Panc1 (cell line): ENCODE measurements at regions of chr15 and their contacts with region 1.

Region 1: DNA sequence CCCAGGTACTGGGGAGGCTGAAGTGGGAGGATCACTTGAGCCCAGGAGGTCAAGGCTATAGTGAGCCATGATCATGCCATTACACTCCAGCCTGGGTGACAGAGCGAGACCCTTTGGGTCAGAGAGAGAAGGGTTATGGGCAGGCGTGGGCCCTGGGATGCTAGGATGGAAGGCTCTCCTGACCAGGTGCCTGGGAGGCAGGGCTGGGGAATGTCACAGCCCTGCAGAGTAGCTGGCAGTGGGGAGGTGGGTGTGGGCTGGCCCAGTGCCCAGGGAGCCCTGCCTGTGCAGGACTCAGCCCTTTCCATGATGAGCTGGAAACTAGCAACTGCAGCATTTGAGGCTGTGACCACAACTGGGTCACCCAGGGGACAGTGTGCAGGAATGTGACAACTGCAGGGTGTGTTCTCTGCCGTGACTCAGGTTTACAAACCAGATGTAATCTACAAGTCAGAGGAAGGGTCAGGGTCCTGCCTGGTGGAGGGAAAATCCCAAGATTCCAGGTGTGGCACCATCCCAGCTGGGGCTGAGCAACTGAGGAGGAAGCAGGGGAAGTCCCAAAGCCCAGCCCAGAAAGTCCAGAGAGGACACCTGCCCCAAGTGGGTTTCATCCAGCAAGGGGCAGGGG is 45.4 kb downstream of the SLC28A1 start:
- DNase-seq: no peak
- ATAC-seq: peak; percentile 86
- H3K4me3 ChIP-seq: no peak overlapping the region
- H3K27ac ChIP-seq: no peak overlapping the region; the same call in 1 of the 2 replicates
- H3K4me1 ChIP-seq: peaks cover 20% of the 10 kb centered on the region
- H3K27me3 ChIP-seq: no peaks in the 10 kb centered on the region
- CTCF ChIP-seq: no peak

Region 2: DNA sequence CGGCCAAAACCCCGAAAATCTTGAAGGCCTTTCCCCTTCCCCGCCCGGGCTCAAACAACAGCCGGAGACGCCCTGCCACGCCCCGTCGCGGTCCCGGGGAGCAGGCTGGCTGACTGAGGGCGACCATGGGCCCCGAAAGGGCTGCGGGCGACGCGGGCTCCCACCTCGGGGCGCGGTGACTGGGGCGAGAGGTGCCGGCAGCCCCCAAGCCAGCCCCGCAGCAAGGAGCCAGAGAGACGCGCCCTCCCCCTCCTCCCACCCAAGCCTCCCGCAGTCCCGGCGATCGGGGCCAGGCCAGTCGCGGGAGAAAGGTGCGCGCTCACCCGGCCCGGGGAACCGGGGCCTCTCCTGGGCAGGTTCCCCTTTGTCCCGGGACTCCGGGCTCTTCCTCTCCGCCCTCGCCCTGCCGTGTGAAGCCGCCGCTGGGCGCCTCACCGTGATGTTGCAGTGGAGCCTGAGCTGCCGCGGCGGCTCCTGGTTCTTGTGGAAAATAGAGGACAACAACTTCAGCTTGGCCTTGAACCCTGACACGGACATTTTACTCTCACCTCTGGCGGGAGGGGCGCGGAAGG is 359.6 kb before region 1 on chr15:
- CTCF ChIA-PET with region 1: interaction called, 12 read pairs
- POLR2A ChIA-PET with region 1: no interaction called
- in situ Hi-C with region 1: no loop called
- intact Hi-C with region 1: no loop called
- DNase-seq: no peak
- ATAC-seq: peak; percentile 82
- H3K4me3 ChIP-seq: peak overlapping the region; percentile 72 to 83
- H3K27ac ChIP-seq: peak overlapping the region; percentile 74
- H3K4me1 ChIP-seq: peaks cover 4% of the 10 kb centered on the region; the same call in 1 of the 2 replicates
- H3K27me3 ChIP-seq: no peaks in the 10 kb centered on the region
- CTCF ChIP-seq: no peak

Region 3: DNA sequence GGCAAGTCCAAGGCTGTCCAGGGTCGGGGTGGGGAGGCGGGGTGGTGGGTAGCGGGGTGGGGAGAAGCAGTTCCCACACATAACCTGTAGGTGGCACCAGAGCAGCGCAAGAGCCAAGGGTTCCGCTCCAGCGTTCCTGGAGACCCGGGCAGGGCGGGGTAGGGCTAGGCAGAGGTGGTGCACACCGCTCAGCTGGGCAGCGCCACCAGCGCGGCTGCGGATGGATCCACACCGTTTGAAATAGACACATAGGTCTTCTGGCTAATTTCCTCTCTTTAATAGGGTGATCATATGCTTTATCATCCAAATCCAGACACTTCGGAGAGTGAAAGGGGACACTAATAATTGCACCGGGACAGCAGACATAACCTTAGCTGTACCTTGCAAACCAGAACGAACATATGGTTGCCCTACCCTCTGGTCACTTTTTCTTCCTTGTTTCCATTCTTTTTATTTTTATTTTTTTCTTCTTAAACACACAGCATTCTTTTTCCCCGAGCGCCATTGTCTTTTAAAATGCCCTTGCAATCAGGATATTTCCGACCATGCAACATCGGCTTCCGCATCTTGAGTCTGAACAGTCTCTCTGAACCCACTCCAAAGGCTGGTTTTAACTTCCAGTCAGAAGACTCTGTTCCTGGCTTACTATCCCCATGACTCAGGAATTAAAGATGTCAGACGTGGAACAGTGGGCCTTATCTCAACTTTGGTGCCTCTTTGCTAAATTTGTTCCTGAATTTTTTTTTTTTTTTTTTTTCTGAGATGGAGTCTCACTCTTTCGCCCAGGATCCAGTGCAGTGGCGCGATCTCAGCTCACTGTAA is 341.6 kb before region 1 on chr15:
- CTCF ChIA-PET with region 1: no interaction called
- POLR2A ChIA-PET with region 1: no interaction called
- in situ Hi-C with region 1: no loop called
- intact Hi-C with region 1: loop called (anchors 5 kb)
- DNase-seq: peak; percentile 41
- ATAC-seq: peak; percentile 100
- H3K4me3 ChIP-seq: peak overlapping the region; percentile 34 to 47
- H3K27ac ChIP-seq: no peak overlapping the region
- H3K4me1 ChIP-seq: no peaks in the 10 kb centered on the region
- H3K27me3 ChIP-seq: no peaks in the 10 kb centered on the region
- CTCF ChIP-seq: peak; percentile 93

Region 4: GRCh38 chr15:84658080-84658787 is 271.6 kb before region 1 on chr15 and contains the start of gene NMB:
- CTCF ChIA-PET with region 1: interaction called, 5 read pairs
- POLR2A ChIA-PET with region 1: no interaction called
- in situ Hi-C with region 1: no loop called
- intact Hi-C with region 1: loop called (anchors 5 kb)
- DNase-seq: no peak
- ATAC-seq: peak; percentile 79
- H3K4me3 ChIP-seq: peak within 1 kb of the TSS; percentile 52 to 70
- H3K27ac ChIP-seq: peak within 1 kb of the TSS; percentile 84
- H3K4me1 ChIP-seq: peaks cover 24% of the 10 kb centered on the region
- H3K27me3 ChIP-seq: no peaks in the 10 kb centered on the region
- CTCF ChIP-seq: peak; percentile 84
- total RNA-seq, gene NMB: 9.5 TPM

Region 5: GRCh38 chr15:84716036-84716799 is 213.6 kb before region 1 on chr15 and contains the start of gene SEC11A:
- CTCF ChIA-PET with region 1: no interaction called
- POLR2A ChIA-PET with region 1: interaction called, 11 read pairs
- in situ Hi-C with region 1: no loop called
- intact Hi-C with region 1: no loop called
- DNase-seq: peak; percentile 91
- ATAC-seq: peak; percentile 99
- H3K4me3 ChIP-seq: peak within 1 kb of the TSS; percentile 82 to 92
- H3K27ac ChIP-seq: peak within 1 kb of the TSS; percentile 93
- H3K4me1 ChIP-seq: peaks cover 6% of the 10 kb centered on the region
- H3K27me3 ChIP-seq: no peaks in the 10 kb centered on the region
- CTCF ChIP-seq: no peak
- total RNA-seq, gene SEC11A: 164 TPM

Region 6: DNA sequence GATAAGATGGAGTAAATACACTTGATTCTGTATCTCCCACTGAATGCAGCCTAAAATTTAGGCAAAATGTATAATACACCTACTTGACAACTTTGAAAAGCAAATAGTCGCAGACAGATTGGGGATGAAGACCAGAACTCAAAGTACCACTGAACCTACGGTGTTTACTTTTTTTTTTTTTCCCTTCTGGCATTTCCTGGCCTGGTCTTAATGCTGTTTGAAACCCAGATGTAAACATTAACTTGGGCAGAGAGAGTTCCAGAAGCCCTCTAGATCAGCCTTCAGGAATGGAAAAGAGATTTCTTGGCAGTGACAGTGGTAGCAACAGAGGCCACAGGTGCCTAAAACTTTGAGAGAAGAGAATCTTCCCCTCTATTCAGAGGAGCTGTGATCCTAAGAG is 84.9 kb before region 1 on chr15:
- CTCF ChIA-PET with region 1: no interaction called
- POLR2A ChIA-PET with region 1: no interaction called
- in situ Hi-C with region 1: no loop called
- intact Hi-C with region 1: loop called (anchors 1 kb)
- DNase-seq: no peak
- ATAC-seq: no peak
- H3K4me3 ChIP-seq: no peak overlapping the region
- H3K27ac ChIP-seq: no peak overlapping the region
- H3K4me1 ChIP-seq: no peaks in the 10 kb centered on the region
- H3K27me3 ChIP-seq: no peaks in the 10 kb centered on the region
- CTCF ChIP-seq: no peak

Region 7: DNA sequence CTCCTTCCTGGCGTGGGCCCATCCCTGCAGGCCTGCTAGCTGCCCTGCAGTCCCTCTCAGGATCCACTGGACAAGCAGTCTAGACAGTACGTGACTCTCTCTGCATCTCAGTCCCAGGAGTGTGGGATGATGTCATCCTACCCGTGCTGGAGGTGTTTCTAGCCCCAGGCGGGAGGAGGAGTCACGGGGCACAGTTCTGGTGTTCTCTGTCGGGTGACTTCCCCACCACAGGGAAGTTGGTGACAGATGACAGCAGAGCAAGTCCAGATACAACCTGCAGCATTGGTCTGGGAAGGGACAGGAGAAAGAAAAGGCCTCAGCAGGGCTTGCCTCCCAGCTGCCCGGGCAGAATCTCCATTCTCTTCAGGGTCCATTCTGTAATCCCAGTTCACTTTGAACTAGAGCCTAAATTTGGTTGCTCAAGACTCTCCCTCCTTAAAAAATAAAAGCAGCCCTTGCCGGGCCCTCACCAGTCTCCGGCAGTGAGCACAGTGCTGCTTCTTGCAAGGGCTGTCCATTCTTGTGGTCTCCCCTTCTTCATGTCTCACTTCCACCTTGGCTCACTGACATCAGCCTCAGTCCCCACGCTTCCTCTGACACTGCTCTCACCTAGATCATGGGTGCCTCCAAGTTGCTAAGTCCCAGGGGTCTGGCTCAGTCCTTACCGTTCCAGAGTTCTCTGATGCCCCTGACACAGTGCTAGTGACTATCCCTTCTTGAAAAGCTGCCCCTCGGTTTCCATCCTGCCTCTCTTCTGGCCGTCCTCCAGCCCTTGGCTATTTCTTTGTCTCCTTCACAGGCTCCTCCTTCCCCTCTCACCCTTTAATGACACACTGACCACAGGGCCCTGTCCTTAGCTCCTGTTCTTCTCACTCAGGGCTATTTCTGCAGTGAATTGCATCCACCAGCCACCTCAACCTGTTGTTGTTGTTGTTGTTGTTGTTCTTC is 14.6 kb before region 1 on chr15:
- CTCF ChIA-PET with region 1: no interaction called
- POLR2A ChIA-PET with region 1: no interaction called
- in situ Hi-C with region 1: no loop called
- intact Hi-C with region 1: no loop called
- DNase-seq: no peak
- ATAC-seq: peak; percentile 71
- H3K4me3 ChIP-seq: no peak overlapping the region
- H3K27ac ChIP-seq: 0 out of 2 replicates have a peak overlapping the region, but pooled peaks have one; percentile 13
- H3K4me1 ChIP-seq: peaks cover 22% of the 10 kb centered on the region
- H3K27me3 ChIP-seq: no peaks in the 10 kb centered on the region
- CTCF ChIP-seq: no peak

Region 8: GRCh38 chr15:85142312-85142711 is 212.5 kb after region 1 on chr15:
- CTCF ChIA-PET with region 1: no interaction called
- POLR2A ChIA-PET with region 1: interaction called, 10 read pairs
- in situ Hi-C with region 1: no loop called
- intact Hi-C with region 1: no loop called
- DNase-seq: no peak
- ATAC-seq: no peak
- H3K4me3 ChIP-seq: no peak overlapping the region
- H3K27ac ChIP-seq: no peak overlapping the region
- H3K4me1 ChIP-seq: no peaks in the 10 kb centered on the region
- H3K27me3 ChIP-seq: no peaks in the 10 kb centered on the region
- CTCF ChIP-seq: no peak